Right ventricle myocardium inferior (tissue), 1 donor: ENCODE measurements at regions of chr12 and their contacts with region 1.

Region 1: DNA sequence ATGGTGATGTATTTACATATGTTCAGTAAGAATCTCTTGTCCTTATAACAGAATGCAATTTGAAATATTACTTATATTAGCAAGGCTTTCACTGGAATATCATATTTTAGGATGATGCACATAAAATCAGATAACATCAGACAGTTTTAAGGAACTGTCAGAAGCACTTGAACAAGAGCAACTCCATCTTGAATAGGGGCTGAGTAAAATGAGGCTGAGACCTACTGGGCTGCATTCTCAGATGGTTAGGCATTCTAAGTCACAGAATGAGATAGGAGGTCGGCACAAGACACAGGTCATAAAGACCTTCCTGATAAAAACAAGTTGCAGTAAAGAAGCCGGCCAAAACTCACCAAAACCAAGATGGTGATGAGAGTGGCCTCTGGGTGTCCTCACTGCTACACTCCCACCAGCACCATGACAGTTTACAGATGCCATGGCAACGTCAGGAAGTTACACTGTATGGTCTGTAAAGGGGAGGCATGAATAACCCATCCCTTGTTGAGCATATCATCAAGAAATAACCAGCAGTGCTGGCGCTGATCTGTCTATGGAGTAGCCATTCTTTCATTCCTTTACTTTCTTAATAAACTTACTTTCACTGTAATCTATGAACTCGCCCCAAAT is 27.6 kb upstream of the ETV6 start:
- DNase-seq: no peak
- ATAC-seq: no peak

Region 2: GRCh38 chr12:10372534-10372931 is 1249.4 kb before region 1 on chr12:
- intact Hi-C with region 1: no loop called
- DNase-seq: no peak
- ATAC-seq: peak; percentile 65

Region 3: GRCh38 chr12:11855983-11856374 is 234.1 kb after region 1 on chr12:
- intact Hi-C with region 1: no loop called
- DNase-seq: no peak
- ATAC-seq: no peak

Region 4: DNA sequence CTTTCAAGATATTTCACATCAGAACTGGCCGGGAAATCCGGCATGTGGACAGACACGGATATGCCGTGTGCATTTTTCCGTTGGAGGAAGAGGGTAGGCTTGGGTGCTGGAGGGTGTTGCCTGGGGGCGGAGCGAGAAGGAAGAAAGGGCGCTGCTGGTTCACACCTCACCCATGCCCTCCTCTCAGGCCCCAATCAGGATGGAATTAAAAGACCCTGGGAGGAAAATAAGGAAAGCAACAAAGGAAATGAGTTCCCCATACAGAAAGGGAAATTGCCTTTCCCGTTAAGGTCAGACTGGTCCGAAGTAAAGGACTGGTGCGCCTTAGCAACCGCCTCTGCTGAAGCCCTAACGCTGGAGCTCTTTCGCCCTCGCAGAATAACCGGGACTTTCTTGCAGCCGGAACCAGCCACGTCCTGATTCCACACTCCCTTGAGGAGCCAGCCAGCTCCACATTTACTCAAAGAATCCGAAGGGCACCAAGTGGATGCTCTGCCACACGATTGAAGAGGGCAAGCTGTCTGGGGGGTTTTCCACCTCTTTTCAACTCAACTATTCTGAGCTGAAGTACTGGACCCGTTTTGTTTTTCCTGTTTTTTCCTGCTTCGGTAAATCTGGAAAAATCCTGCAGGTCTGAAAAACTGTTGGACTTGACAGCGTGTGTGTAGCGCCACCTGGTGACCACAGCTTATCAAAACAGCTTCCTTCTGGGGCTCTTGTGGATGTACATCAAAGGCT is 411.1 kb after region 1 on chr12:
- intact Hi-C with region 1: loop called (anchors 2 kb)
- DNase-seq: no peak
- ATAC-seq: peak; percentile 78